ENCODE measurements at regions of chr3 and their contacts with region 1.

Region 1: DNA sequence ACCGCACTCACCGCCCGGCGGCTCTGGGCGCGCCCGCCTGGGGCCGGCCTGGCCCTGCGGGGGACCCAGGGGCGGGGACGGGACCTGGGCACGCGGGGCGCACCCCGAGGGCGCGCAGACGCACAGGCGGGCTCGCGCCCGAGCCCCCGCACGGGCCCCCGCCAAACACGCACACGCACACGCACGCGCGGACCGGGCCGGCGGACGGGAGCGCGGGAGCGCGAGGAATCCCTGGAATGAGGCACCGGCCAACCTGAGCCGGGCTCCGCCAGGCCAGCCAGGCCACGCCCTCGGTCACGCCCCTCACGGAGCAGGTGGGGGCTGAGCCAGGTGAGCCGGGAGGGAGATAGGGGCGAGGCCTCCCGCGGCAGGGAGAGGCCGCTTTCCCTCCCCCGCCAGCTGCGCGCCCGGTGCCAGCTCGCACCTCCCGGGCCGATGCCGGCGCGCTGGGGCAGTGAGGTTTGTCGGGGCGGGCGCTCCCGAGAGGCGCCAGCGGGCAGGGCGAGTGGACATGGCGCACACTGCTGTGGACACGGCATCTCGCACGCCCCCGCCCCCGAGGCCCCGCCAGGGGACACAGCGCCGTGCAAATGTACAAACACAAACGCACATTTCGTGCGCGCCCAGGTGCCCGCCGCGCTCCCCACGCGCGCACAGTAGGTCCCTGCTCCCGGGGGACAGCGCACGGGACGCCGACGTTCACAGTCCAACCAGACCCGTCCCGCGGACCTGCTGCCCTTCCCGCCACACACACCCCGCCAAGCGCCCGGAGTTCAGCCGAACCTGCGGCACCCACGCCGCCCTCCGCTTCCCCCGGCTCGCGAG is 75.9 kb upstream of the VGLL4 start:
- DNase-seq: peak; percentile 94

Region 2: GRCh38 chr3:11624161-11624560 is 95.5 kb before region 1 on chr3:
- in situ Hi-C with region 1: loop called (anchors 5 kb)
- DNase-seq: no peak